ENCODE measurements at regions of chr17 and their contacts with region 1.

Region 1: GRCh38 chr17:8057691-8058114 is 18.8 kb downstream of the ALOX15B start:
- DNase-seq: peak; percentile 61 to 63
- H3K4me3 ChIP-seq: no peak overlapping the region; the same call in 1 of the 2 replicates
- H3K27ac ChIP-seq: no peak overlapping the region
- H3K4me1 ChIP-seq: peaks cover 28% of the 10 kb centered on the region
- H3K27me3 ChIP-seq: peaks cover 5% of the 10 kb centered on the region
- CTCF ChIP-seq: peak; percentile 74

Region 2: GRCh38 chr17:7823581-7824397 is 233.9 kb before region 1 on chr17:
- CTCF ChIA-PET with region 1: no interaction called
- POLR2A ChIA-PET with region 1: no interaction called
- intact Hi-C with region 1: loop called (anchors 5 kb)
- DNase-seq: no peak
- H3K4me3 ChIP-seq: no peak overlapping the region
- H3K27ac ChIP-seq: no peak overlapping the region
- H3K4me1 ChIP-seq: no peaks in the 10 kb centered on the region
- H3K27me3 ChIP-seq: no peaks in the 10 kb centered on the region
- CTCF ChIP-seq: no peak

Region 3: DNA sequence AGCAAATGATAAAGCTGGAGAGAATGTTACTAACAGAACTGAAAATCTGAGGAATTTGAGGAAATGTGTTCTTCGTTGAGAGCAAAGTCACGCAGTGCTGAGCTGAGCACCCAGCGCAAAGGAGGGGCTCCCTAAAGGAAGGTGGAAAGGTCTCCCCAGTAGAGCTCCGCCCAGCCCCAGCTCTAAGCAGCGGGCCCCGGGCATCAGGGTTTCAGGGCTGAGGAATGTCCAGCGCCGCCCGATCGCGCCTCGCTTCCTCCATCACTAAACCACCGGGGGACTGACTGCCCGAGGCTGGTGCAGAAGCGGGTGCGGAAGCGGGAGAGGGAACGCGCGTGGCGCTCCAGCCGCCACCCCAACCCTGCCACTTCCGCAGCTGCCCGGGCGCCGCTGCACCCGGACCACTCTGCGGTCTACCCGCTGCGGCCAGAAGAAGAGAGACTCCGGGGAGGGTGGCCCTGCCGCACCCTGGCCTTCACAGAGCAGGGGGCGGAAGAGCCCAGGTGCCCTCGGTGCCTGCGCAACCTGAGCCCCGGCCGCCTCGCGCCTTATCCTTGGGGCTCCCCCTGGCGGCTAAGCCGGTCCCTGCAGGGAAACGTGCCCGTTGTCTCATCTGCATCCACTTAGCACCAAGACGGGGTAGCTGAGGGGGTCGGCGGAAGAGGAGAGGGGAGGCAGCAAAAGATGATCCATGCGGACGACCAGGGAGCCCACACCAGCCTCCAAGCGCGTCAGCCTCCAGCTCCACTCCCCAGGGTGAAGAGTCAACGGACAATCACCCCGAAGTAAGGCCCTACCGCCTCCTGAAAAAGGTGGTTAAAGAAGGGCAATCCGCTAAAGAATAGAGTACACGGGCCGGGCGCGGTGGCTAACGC is 67.7 kb before region 1 on chr17:
- CTCF ChIA-PET with region 1: interaction called, 10 read pairs
- POLR2A ChIA-PET with region 1: no interaction called
- intact Hi-C with region 1: loop called (anchors 5 kb)
- DNase-seq: peak; percentile 40 to 92
- H3K4me3 ChIP-seq: peak overlapping the region; percentile 62
- H3K27ac ChIP-seq: no peak overlapping the region
- H3K4me1 ChIP-seq: no peaks in the 10 kb centered on the region; the same call in 1 of the 2 replicates
- H3K27me3 ChIP-seq: no peaks in the 10 kb centered on the region
- CTCF ChIP-seq: peak; percentile 83

Region 4: GRCh38 chr17:8041249-8041928 is 16.3 kb before region 1 on chr17:
- CTCF ChIA-PET with region 1: interaction called, 18 read pairs
- POLR2A ChIA-PET with region 1: no interaction called
- intact Hi-C with region 1: no loop called
- DNase-seq: peak; percentile 43 to 51
- H3K4me3 ChIP-seq: no peak overlapping the region
- H3K27ac ChIP-seq: no peak overlapping the region
- H3K4me1 ChIP-seq: peaks cover 5% of the 10 kb centered on the region; the same call in 1 of the 2 replicates
- H3K27me3 ChIP-seq: no peaks in the 10 kb centered on the region
- CTCF ChIP-seq: peak; percentile 77

Region 5: GRCh38 chr17:8079291-8080207 is 21.8 kb after region 1 on chr17:
- CTCF ChIA-PET with region 1: no interaction called
- POLR2A ChIA-PET with region 1: no interaction called
- intact Hi-C with region 1: no loop called
- DNase-seq: peak in 1 of 2 experiments; percentile 78
- H3K4me3 ChIP-seq: peak overlapping the region; percentile 54
- H3K27ac ChIP-seq: no peak overlapping the region
- H3K4me1 ChIP-seq: no peaks in the 10 kb centered on the region
- H3K27me3 ChIP-seq: peaks cover 6% of the 10 kb centered on the region
- CTCF ChIP-seq: peak; percentile 81

Region 6: GRCh38 chr17:8745586-8746500 is 688.1 kb after region 1 on chr17:
- CTCF ChIA-PET with region 1: no interaction called
- POLR2A ChIA-PET with region 1: no interaction called
- intact Hi-C with region 1: loop called (anchors 5 kb)
- DNase-seq: peak in 1 of 2 experiments; percentile 59
- H3K4me3 ChIP-seq: peak overlapping the region; percentile 31; the same call in 1 of the 2 replicates
- H3K27ac ChIP-seq: no peak overlapping the region
- H3K4me1 ChIP-seq: no peaks in the 10 kb centered on the region
- H3K27me3 ChIP-seq: peaks cover 18% of the 10 kb centered on the region
- CTCF ChIP-seq: peak; percentile 76

Region 7: GRCh38 chr17:9522074-9522473 is 1464.4 kb after region 1 on chr17:
- CTCF ChIA-PET with region 1: no interaction called
- POLR2A ChIA-PET with region 1: no interaction called
- intact Hi-C with region 1: loop called (anchors 10 kb)
- DNase-seq: peak in 1 of 2 experiments; percentile 17
- H3K4me3 ChIP-seq: no peak overlapping the region
- H3K27ac ChIP-seq: no peak overlapping the region
- H3K4me1 ChIP-seq: no peaks in the 10 kb centered on the region
- H3K27me3 ChIP-seq: no peaks in the 10 kb centered on the region
- CTCF ChIP-seq: peak; percentile 58

Measured in PC-9 (cell line).